Psoas muscle (tissue), 8 donors: ENCODE measurements at regions of chr3 and their contacts with region 1.

Region 1: DNA sequence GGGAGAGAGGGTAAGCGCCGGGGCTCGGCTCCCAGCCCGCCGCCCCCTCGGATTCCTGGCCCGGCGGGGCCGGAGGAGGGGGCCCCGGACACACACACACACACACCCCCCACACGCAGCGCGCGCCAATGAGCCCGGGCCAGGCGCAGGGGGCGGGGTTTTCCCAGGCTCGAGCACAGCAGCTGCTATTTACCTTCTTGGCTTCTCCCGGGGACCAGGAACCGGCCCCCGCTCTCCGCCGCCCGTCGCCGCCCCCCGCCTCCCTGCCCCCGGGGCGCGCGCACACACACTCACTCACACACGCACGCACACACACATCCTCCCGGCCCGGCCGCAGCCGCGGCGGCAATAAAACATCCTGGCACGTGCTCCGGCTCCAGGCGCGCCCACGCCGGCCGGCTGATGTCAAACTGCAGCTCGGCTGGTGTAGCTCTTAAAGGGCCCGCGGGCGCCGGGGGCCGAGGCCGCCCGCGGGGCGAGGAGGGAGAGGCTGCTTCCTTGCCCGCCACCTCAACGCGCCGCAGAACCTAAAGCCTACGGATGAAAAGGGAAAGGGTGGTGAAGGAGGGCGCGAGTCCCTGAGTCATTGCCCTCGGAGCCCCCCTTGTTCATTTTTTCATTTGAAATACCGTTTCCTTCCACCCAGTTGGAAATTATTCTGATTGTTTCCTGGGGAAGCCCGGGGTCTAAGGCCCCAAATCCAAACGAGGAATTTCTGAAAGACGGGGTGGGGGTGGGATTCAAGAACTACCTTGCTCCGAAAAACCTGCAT is 1.0 kb upstream of the HES1 start:
- DNase-seq: peak; percentile 93 to 96
- ATAC-seq: peak; percentile 69 to 78 (median 72)
- H3K4me3 ChIP-seq: peak overlapping the region; percentile 92
- H3K27ac ChIP-seq: peak overlapping the region; percentile 99
- H3K4me1 ChIP-seq: peaks cover 47% of the 10 kb centered on the region
- H3K27me3 ChIP-seq: no peaks in the 10 kb centered on the region
- CTCF ChIP-seq: no peak

Region 2: DNA sequence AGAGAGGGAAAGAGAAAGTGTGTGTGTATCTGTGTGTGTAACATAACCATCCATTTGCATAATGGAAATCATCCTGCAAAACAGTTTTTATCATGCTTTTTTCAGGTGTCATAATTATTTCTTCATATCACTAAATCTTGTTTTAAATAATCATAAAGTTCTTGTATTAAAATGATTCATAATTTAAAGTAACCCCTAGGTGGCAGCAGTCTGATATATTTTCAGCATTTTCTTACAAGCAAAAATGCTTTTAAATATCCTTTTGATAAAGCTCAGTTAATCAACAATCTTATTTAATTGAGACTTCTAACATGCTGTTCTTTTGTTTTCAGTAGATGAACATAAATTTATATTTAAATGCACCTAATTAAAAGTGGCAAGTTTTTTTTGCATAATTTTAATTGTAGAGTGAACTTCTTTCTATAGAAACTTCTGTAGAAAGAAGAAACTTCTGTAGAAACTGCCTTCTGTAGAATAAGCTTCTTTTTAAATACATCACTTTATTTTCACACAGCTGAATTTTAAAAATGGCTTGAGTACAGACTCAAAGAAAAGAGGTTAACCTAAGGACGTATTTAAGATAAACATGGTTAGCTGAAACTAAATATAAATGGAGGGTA is 469.5 kb before region 1 on chr3:
- intact Hi-C with region 1: loop called in 1 of 2 experiments (anchors 5 kb)
- DNase-seq: no peak
- ATAC-seq: no peak
- H3K4me3 ChIP-seq: no peak overlapping the region
- H3K27ac ChIP-seq: no peak overlapping the region
- H3K4me1 ChIP-seq: no peaks in the 10 kb centered on the region
- H3K27me3 ChIP-seq: no peaks in the 10 kb centered on the region
- CTCF ChIP-seq: peak; percentile 48

Region 3: GRCh38 chr3:193788189-193788991 is 346.6 kb before region 1 on chr3:
- intact Hi-C with region 1: loop called (anchors 2 to 5 kb)
- DNase-seq: peak; percentile 50 to 75
- ATAC-seq: peak; percentile 95 to 99 (median 96)
- H3K4me3 ChIP-seq: no peak overlapping the region
- H3K27ac ChIP-seq: no peak overlapping the region
- H3K4me1 ChIP-seq: no peaks in the 10 kb centered on the region
- H3K27me3 ChIP-seq: peaks cover 0 to 4% (median 0%) of the 10 kb centered on the region in 3 donors
- CTCF ChIP-seq: peak; percentile 81

Region 4: DNA sequence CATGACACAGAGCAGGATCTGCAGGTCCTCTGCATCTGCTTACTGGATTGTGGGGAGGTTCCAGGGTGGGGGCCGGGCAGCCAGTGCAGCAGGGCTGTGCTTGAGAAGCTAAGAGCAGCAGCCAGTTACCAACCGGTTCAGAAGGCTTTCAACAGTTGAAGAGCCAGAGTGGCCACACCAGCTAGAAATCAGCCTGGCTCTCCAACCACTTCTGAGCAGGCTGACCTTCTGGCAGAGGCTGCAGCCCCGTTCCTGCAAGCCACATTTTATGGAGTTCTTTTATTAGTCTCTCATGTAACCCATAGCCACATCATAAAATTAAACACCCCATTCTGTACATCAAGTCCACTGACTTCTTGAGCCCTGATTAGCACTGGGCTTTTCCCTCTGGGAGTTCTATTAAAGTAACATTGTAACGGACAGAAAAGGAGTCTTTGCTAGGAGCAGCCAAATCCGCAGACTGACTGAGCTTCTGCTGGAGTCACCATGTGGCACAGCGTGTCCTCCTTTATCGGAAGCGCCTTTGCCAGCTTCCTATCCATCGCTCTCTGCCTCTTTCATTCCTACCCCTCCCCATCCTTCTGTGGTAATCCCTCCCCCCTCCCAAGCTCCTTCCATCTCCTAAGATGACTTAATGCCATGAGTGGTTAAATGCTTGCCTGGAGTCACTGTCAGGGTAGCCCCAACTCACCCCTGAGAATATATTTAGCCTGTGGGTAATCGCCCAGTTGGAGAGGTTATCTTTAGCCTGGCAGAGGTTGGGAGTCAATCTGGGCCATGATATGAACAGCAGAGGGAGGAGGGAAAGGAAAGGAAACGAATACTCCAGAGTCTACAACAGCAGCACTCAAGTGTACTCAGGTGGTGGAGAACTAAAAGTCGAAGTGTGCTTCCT is 137.5 kb before region 1 on chr3:
- intact Hi-C with region 1: loop called (anchors 1 to 5 kb)
- DNase-seq: peak; percentile 32 to 77
- ATAC-seq: peak; percentile 80 to 90 (median 87)
- H3K4me3 ChIP-seq: no peak overlapping the region
- H3K27ac ChIP-seq: peak overlapping the region; percentile 84
- H3K4me1 ChIP-seq: peaks cover 47% of the 10 kb centered on the region
- H3K27me3 ChIP-seq: no peaks in the 10 kb centered on the region
- CTCF ChIP-seq: no peak

Region 5: GRCh38 chr3:194070634-194071409 is 64.1 kb before region 1 on chr3:
- intact Hi-C with region 1: loop called (anchors 2 to 5 kb)
- DNase-seq: peak; percentile 90 to 93
- ATAC-seq: peak; percentile 89 to 94 (median 91)
- H3K4me3 ChIP-seq: peak overlapping the region; percentile 62
- H3K27ac ChIP-seq: peak overlapping the region; percentile 87
- H3K4me1 ChIP-seq: peaks cover 18% of the 10 kb centered on the region
- H3K27me3 ChIP-seq: no peaks in the 10 kb centered on the region
- CTCF ChIP-seq: no peak

Region 6: GRCh38 chr3:194315088-194315964 is 180.4 kb after region 1 on chr3:
- intact Hi-C with region 1: loop called (anchors 2 to 5 kb)
- DNase-seq: peak; percentile 88 to 91
- ATAC-seq: peak; percentile 85 to 90 (median 88)
- H3K4me3 ChIP-seq: peak overlapping the region; percentile 63
- H3K27ac ChIP-seq: no peak overlapping the region
- H3K4me1 ChIP-seq: peaks cover 7% of the 10 kb centered on the region
- H3K27me3 ChIP-seq: peaks cover 0 to 36% (median 5%) of the 10 kb centered on the region in 3 donors
- CTCF ChIP-seq: peak; percentile 98

Region 7: DNA sequence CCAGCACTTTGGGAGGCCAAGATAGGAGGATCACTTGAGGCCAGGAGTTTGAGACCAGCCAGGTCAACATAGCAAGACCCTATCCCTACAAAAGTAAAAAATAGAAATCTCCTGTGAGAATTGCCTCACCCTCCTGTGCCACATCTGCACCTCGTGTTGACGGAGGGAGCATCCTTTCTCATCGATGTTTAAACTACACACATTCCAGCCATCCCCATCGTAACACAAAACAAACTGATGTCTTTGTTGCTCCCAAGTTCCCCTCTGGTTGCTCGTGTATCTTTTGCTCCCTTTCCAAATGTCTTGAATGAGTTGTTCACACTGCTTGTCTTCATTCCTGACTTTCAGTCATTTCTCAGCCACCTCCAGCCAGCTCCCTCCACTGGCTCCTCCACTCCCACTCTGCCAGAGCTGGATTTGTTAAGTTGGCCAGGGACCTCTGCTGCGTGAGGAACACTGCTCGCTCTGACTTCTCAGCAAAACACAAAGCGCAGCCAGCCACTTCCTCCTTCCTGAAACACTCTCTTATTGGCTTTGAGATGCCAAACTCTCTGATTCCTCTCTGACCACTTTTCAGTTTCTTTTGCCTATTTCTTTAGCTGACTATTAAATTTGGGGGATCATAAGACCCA is 405.4 kb after region 1 on chr3:
- intact Hi-C with region 1: no loop called
- DNase-seq: peak in 1 of 2 donors; percentile 38
- ATAC-seq: no peak
- H3K4me3 ChIP-seq: no peak overlapping the region
- H3K27ac ChIP-seq: no peak overlapping the region
- H3K4me1 ChIP-seq: peaks cover 9% of the 10 kb centered on the region
- H3K27me3 ChIP-seq: no peaks in the 10 kb centered on the region
- CTCF ChIP-seq: no peak